ENCODE measurements at regions of chr10 and their contacts with region 1.

Region 1: GRCh38 chr10:110871298-110872084 is at the start of gene PDCD4:
- DNase-seq: peak; percentile 94
- H3K4me3 ChIP-seq: peak within 1 kb of the TSS; percentile 71
- H3K27ac ChIP-seq: peak within 1 kb of the TSS; percentile 69
- H3K27me3 ChIP-seq: peaks cover 2% of the 10 kb centered on the region
- CTCF ChIP-seq: no peak
- polyA plus RNA-seq, gene PDCD4: 66.0 and 95.4 TPM in 2 replicates

Region 2: DNA sequence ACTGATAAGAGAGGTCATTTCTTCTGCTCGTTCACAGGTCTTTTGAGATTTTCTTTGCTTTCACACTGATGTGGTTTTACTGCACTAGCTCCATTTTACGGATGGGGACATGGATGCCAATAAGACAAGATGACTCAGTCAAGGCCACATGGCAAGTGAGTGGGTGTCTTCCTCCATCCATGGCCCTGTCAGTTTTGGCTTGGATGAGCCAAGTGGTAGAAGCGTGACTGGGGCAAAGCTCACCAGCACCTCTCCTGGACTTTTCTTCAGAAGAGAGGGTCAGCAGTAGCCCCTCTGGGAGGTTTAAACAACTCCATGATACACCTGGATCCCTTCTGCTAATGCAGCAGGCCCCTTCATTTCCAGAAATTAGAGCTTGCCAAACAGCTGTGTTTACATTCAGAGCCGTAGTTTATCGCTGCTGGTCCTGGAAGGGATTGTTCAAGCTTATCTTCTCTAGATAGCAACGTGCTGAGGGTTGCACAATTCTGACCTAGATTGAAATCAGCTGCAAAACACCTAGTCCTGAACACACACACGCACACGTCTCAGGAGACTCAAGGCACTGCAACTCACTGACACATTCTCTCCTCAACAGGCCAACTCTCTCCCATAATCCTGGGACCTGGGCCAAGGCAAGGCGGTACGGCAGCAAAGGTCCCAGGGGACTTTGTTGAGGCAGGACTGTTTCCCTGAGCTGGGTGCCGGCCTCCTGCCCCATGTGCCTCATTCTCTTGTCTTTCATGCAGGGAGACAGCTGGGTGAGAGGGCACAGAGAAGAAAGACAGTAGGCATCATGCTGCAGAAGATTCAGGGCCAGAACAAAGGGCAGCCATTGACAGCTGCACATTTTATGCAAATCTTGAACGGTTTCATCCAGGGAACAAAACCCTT is 14.0 kb before region 1 on chr10:
- CTCF ChIA-PET with region 1: interaction called, 3 read pairs
- POLR2A ChIA-PET with region 1: interaction called, 22 read pairs
- DNase-seq: peak; percentile 63
- H3K4me3 ChIP-seq: no peak overlapping the region
- H3K27ac ChIP-seq: peak overlapping the region; percentile 35
- H3K27me3 ChIP-seq: peaks cover 2% of the 10 kb centered on the region
- CTCF ChIP-seq: no peak

Region 3: GRCh38 chr10:110918643-110919363 is 47.3 kb after region 1 on chr10 and contains the start of gene BBIP1:
- CTCF ChIA-PET with region 1: no interaction called
- POLR2A ChIA-PET with region 1: interaction called, 16 read pairs
- DNase-seq: peak; percentile 99
- H3K4me3 ChIP-seq: peak within 1 kb of the TSS; percentile 81
- H3K27ac ChIP-seq: peak within 1 kb of the TSS; percentile 98
- H3K27me3 ChIP-seq: no peaks in the 10 kb centered on the region
- CTCF ChIP-seq: no peak
- polyA plus RNA-seq, gene BBIP1: 29.9 and 41.5 TPM in 2 replicates